Activated CD4-positive, alpha-beta T cell treated with anti-CD3 and anti-CD28 coated beads, Interleukin-2, amount 10 ng/mL, durations not matched to agents 24 days and 14 days (primary cell): ENCODE measurements at regions of chr9 and their contacts with region 1.

Region 1: GRCh38 chr9:5832543-5833529 is at the start of gene ERMP1:
- DNase-seq: peak; percentile 97
- H3K4me3 Mint-ChIP-seq: peak within 1 kb of the TSS; percentile 98
- H3K27ac Mint-ChIP-seq: peak within 1 kb of the TSS; percentile 88
- H3K4me1 Mint-ChIP-seq: peaks cover 44% of the 10 kb centered on the region
- H3K27me3 Mint-ChIP-seq: peaks cover 4% of the 10 kb centered on the region
- total RNA-seq, gene ERMP1: 17.3 and 18.0 TPM in 2 replicates

Region 2: GRCh38 chr9:5764130-5764868 is 68.5 kb before region 1 on chr9:
- intact Hi-C with region 1: loop called (anchors 2 kb)
- DNase-seq: peak; percentile 73
- H3K4me3 Mint-ChIP-seq: no peak overlapping the region
- H3K27ac Mint-ChIP-seq: peak overlapping the region; percentile 45
- H3K4me1 Mint-ChIP-seq: peaks cover 33% of the 10 kb centered on the region
- H3K27me3 Mint-ChIP-seq: no peaks in the 10 kb centered on the region

Region 3: GRCh38 chr9:5799314-5799713 is 33.5 kb before region 1 on chr9:
- intact Hi-C with region 1: loop called (anchors 2 kb)
- DNase-seq: peak; percentile 63
- H3K4me3 Mint-ChIP-seq: no peak overlapping the region
- H3K27ac Mint-ChIP-seq: no peak overlapping the region
- H3K4me1 Mint-ChIP-seq: peaks cover 14% of the 10 kb centered on the region
- H3K27me3 Mint-ChIP-seq: no peaks in the 10 kb centered on the region

Region 4: DNA sequence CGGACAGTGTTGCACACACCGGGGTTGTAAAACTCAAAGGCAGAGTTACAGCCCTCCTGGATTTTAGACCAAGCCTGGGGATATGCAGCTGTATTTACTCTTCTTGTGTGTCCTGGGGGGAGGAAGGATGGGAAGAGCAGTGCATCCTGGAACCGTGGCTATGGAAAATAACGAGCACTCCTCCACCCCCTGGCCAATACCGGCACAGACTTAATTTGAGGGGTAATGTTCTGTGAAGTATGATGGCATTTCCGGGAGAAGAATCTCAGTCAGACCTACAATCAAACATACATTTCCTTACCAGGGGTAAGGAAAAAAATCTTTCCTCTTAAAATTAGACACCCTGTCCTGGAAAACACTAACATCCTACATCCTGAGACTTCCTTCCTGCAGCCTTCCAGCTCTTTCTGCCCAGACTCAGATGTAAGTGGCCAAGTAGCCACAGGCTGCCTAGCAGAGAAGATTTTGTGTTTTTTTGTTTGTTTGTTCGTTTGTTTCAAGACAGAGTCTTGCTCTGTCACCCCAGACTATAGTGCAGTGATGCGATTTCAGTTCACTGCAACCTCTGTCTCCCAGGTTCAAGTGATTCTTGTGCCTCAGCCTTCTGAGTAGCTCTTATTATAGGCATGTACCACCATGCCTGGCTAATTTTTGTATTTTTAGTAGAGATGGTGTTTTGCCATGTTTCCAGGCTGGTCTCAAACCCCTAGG is 11.1 kb after region 1 on chr9:
- intact Hi-C with region 1: loop called (anchors 1 kb)
- DNase-seq: peak; percentile 63
- H3K4me3 Mint-ChIP-seq: peak overlapping the region; percentile 73
- H3K27ac Mint-ChIP-seq: peak overlapping the region; percentile 91
- H3K4me1 Mint-ChIP-seq: peaks cover 68% of the 10 kb centered on the region
- H3K27me3 Mint-ChIP-seq: no peaks in the 10 kb centered on the region

Region 5: GRCh38 chr9:5851445-5851844 is 18.6 kb after region 1 on chr9:
- intact Hi-C with region 1: loop called (anchors 2 kb)
- DNase-seq: peak; percentile 84
- H3K4me3 Mint-ChIP-seq: peak overlapping the region; percentile 48
- H3K27ac Mint-ChIP-seq: peak overlapping the region; percentile 67
- H3K4me1 Mint-ChIP-seq: peaks cover 55% of the 10 kb centered on the region
- H3K27me3 Mint-ChIP-seq: no peaks in the 10 kb centered on the region